GM18951 (cell line): ENCODE measurements at regions of chr5 and their contacts with region 1.

Region 1: DNA sequence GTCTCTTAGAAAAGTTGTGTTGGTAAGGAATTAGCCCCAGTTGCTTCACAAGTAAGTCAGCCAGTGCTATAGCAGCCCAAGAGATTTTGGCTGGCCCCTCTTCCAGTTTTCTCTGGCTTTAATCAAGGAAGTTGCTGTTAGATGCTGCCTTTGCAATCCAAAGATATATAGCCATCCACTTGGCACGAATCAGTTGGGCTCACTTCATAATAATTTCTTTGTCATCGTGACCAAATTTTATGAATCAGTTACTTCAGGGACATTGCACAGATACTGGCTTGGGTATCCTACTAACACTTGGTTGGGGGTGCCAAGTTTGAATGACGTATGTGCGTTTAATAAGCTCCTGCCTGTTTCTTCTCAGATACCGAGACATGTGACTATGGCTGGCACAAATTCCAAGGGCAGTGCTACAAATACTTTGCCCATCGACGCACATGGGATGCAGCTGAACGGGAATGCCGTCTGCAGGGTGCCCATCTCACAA is 81.5 kb downstream of the VCAN start:
- POLR2A ChIP-seq: no peak

Region 2: DNA sequence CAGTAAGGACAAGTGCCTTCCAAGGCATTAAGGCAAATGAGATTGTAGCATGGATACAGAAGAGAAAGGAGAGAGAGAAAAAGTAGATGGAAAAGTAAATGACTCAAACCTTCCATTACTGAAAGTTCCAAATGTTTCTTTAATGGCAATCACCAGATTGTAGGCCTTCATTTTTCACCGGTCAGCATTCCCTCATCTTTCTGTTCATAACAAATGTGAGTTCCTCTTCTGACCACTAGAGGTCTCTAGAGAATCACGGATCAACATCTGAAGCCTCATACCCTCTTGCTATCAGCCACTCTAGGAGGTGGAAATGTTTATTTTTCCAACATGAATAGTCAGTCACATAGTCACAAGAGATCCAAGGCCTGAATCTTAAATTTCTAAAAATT is 1201.3 kb before region 1 on chr5:
- in situ Hi-C with region 1: loop called (anchors 10 kb)
- POLR2A ChIP-seq: no peak